ENCODE measurements at regions of chr2 and their contacts with region 1.

Region 1: GRCh38 chr2:39059366-39059952 is 61.4 kb downstream of the SOS1 start:
- DNase-seq: peak; percentile 71

Region 2: DNA sequence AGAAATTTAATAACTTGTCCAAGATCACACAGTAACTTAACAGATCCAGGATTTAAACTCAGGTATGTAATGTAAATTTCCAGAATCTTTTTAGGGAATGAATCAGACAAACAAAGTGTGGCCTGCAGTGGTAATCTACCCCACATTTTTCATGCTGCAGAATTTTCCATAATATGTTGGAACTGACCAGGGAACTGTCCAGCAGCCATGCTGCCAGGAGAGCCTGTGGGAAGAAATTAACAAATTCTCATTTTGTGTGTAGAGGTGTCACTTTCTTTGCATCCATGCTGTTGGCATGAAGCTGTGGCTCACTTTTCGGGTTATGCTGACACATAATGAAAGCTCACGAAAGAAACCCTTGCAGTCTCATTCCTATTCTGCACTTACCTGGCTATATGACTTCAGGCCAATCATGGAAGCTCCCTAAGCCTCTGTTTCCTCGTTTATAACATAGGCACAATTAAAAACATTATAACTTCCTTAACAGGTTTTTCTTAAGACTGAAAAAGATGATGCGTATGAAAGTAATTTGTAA is 129.6 kb after region 1 on chr2:
- in situ Hi-C with region 1: no loop called
- DNase-seq: no peak

Region 3: GRCh38 chr2:39227628-39228412 is 168.4 kb after region 1 on chr2:
- in situ Hi-C with region 1: loop called (anchors 25 kb)
- DNase-seq: peak; percentile 61

Region 4: DNA sequence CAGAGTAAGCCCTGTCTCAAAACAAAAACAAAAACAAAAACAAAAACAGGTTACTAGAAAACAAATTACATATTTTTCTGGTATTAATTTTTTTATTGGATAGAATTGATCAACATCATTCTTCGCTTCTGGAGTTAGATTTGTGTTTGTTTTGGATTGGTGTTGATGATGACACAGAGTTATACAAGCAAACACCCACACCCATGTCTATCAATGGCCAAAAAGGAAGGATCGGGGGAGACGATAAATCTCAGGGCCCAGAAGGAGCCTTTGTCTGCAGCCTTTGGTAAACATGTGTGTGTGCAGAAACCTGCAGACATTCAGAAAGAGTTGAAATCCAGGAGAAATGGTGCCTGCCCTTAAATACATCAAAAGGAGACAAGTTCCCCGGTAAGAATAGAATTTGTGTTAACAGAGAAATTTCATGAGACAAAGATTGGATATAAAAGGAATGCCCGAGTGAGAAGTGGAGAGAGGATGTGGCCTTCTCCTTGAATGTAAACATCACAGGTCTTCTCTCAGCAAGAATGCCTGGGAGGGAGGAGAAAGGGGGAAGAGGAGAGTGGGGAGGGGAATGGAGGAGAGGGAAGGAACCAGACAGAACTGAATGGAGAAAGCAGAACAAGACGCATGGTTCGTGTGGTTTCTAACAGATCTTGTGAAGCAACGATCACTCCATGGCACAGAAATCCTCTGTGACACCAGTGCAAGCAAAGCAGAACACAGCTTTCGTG is 565.9 kb after region 1 on chr2:
- in situ Hi-C with region 1: no loop called
- DNase-seq: no peak

Measured in ACHN (cell line).